Calu3 (cell line): ENCODE measurements at regions of chr7 and their contacts with region 1.

Region 1: GRCh38 chr7:111561885-111562732 is at the start of gene IMMP2L:
- DNase-seq: peak; percentile 94
- H3K4me3 Mint-ChIP-seq: peak within 1 kb of the TSS; percentile 84
- H3K27ac Mint-ChIP-seq: peak within 1 kb of the TSS; percentile 85
- H3K4me1 Mint-ChIP-seq: no peaks in the 10 kb centered on the region
- H3K27me3 Mint-ChIP-seq: no peaks in the 10 kb centered on the region
- CTCF ChIP-seq: no peak
- total RNA-seq, gene IMMP2L: 28.6 and 38.8 TPM in 2 replicates

Region 2: GRCh38 chr7:111460695-111461094 is 101.4 kb before region 1 on chr7:
- CTCF ChIA-PET with region 1: no interaction called
- intact Hi-C with region 1: no loop called
- DNase-seq: no peak
- H3K4me3 Mint-ChIP-seq: no peak overlapping the region
- H3K27ac Mint-ChIP-seq: no peak overlapping the region
- H3K4me1 Mint-ChIP-seq: no peaks in the 10 kb centered on the region
- H3K27me3 Mint-ChIP-seq: no peaks in the 10 kb centered on the region
- CTCF ChIP-seq: no peak

Region 3: GRCh38 chr7:111474723-111475418 is 87.2 kb before region 1 on chr7:
- CTCF ChIA-PET with region 1: no interaction called
- intact Hi-C with region 1: no loop called
- DNase-seq: no peak
- H3K4me3 Mint-ChIP-seq: no peak overlapping the region
- H3K27ac Mint-ChIP-seq: no peak overlapping the region
- H3K4me1 Mint-ChIP-seq: no peaks in the 10 kb centered on the region
- H3K27me3 Mint-ChIP-seq: no peaks in the 10 kb centered on the region
- CTCF ChIP-seq: no peak

Region 4: GRCh38 chr7:111517549-111517951 is 44.6 kb before region 1 on chr7:
- CTCF ChIA-PET with region 1: no interaction called
- intact Hi-C with region 1: loop called (anchors 1 kb)
- DNase-seq: peak; percentile 13
- H3K4me3 Mint-ChIP-seq: peak overlapping the region; percentile 21
- H3K27ac Mint-ChIP-seq: peak overlapping the region; percentile 91
- H3K4me1 Mint-ChIP-seq: peaks cover 10% of the 10 kb centered on the region
- H3K27me3 Mint-ChIP-seq: no peaks in the 10 kb centered on the region
- CTCF ChIP-seq: no peak